ENCODE measurements at regions of chr10 and their contacts with region 1.

Region 1: DNA sequence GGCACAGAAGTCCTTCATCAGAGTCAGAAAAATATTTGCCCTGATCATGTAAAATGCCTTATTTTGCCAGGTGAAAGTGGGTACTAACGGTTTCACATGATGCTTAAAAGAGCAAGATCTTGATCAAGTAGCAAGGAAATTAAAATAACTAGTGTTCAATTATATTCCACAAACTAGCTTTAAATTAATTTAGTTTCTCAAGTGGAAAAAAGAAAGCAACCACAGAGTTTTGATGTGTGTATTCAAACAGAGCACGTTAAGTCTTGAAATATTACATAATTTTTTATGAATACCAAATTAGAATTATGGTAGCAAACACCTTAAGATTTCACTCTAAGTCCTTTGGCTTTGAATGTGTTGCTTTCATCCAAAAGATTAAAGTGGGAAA is 47.3 kb downstream of the PIP4K2A start:
- DNase-seq: no peak
- ATAC-seq: no peak
- H3K4me3 ChIP-seq: no peak overlapping the region
- H3K27ac ChIP-seq: no peak overlapping the region
- H3K4me1 ChIP-seq: 0 out of 2 replicates have a peak, but pooled peaks cover under 1% of the 10 kb centered on the region
- H3K27me3 ChIP-seq: no peaks in the 10 kb centered on the region
- CTCF ChIP-seq: no peak

Region 2: DNA sequence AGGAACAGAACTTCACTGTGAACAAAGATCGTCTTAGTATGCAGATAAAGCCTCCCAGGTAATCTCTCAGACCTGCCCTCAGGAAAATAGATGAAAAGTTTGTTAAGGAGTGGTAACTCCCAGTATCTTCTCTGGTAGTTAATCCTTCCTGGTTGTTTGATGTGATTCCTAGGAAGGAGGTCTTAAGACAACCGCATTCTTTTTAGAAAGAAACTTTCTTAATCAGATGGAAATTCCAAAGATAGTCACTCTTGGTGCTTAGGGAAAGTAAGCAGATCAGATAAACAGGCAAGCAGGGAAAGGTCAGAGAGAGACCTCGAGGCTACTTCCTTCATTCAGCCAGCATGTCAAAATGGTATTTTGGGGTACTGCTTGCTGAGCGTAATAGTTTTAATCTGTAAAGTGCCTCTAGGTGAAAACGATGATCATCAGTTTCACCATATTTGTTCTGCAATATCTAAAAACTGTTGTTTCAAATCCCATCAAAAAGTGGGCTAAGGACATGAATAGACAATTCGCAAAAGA is 230.3 kb after region 1 on chr10:
- CTCF ChIA-PET with region 1: no interaction called
- POLR2A ChIA-PET with region 1: interaction called, 10 read pairs
- intact Hi-C with region 1: no loop called
- DNase-seq: no peak
- ATAC-seq: no peak
- H3K4me3 ChIP-seq: no peak overlapping the region
- H3K27ac ChIP-seq: no peak overlapping the region
- H3K4me1 ChIP-seq: no peaks in the 10 kb centered on the region
- H3K27me3 ChIP-seq: no peaks in the 10 kb centered on the region
- CTCF ChIP-seq: no peak